ENCODE measurements at regions of chr2 and their contacts with region 1.

Region 1: DNA sequence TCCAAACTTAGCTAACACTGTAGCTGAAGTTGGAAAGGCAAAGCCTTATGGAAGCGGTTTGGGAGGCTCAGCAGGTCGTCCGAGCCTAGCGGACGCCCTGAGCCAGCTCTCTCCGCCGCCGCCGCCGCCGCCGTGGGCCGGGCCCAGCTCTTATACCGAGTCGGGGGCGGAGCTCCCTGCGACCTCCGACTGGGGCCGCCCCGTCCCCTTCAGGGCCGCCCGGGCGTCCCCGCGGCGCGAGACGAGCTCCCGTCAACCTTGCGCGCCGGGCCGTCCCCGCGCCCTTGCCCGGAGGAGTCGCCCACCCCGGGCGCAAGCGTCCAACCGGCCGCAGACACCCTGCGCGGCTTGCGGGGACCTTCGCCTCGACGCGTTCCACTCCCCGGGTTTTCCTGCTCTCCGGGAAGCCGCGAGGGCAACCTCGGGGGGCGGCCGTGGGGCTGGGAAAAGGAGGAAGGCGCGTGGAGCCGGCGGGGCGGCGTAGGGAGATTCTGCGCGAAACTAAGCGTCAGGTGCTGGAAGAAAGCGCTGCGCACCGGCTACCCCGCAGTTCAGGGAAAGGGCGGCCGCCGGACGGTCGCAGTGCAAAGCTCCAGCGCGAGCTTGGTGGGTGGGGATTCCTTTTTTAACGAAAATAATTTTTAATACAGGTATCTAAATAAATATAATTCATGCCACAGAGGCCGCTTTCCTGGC is at the start of gene SLC40A1:
- DNase-seq: peak; percentile 65 to 83
- ATAC-seq: peak; percentile 78 to 83
- H3K4me3 ChIP-seq: peak within 1 kb of the TSS; percentile 66 to 93 (median 79)
- H3K27ac ChIP-seq: peak within 1 kb of the TSS; percentile 87 to 93 (median 89)
- H3K4me1 ChIP-seq: peaks cover 41 to 44% of the 10 kb centered on the region in 2 donors
- H3K27me3 ChIP-seq: no peaks in the 10 kb centered on the region
- CTCF ChIP-seq: no peak
- POLR2A ChIP-seq: peak; percentile 84
- total RNA-seq, gene SLC40A1: 24.8 to 81.8 (median 37.4) TPM

Region 2: DNA sequence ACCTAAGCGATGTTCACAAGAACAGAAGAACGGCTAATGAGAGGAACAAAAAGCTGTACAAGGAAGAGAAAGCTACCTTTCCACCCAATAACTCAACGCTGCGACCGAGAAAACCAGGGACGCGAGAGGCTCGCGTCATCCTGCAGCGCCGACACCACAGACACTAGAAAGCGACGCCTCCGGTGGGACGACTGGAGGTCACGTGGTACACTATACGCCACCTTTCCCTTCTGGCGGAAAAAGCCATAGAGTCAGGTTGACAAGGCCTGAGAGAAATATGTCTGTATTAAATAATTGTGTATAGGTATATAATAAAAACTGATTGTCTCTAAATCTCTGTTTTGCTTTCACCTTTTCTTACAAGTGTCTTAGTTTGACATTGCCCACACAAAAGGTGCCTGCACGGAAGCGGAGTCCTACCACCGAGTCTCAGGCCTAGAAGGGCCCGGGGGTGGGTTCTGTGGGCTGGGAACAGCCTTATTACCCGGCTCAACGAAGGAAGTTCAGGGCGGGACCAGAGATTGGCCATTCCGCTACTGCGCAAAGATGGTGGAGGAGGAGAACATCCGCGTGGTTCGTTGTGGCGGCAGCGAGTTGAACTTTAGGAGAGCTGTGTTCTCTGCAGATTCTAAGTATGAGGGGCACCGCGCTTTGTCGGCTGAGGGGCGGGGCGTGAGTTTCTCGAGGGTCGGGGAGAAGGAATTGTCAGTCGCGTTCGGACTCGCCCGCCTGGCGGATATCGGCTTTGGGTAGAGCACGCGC is 139.7 kb before region 1 on chr2 and contains the start of gene WDR75:
- in situ Hi-C with region 1: no loop called
- intact Hi-C with region 1: loop called (anchors 5 kb)
- DNase-seq: peak; percentile 89 to 91
- ATAC-seq: peak; percentile 97 to 98
- H3K4me3 ChIP-seq: peak within 1 kb of the TSS; percentile 66 to 95 (median 75)
- H3K27ac ChIP-seq: peak within 1 kb of the TSS; percentile 89 to 92 (median 90)
- H3K4me1 ChIP-seq: peaks cover 23 to 25% of the 10 kb centered on the region in 2 donors
- H3K27me3 ChIP-seq: no peaks in the 10 kb centered on the region
- CTCF ChIP-seq: no peak
- POLR2A ChIP-seq: peak; percentile 63 to 72
- total RNA-seq, gene WDR75: 14.0 to 21.4 (median 16.7) TPM

Region 3: DNA sequence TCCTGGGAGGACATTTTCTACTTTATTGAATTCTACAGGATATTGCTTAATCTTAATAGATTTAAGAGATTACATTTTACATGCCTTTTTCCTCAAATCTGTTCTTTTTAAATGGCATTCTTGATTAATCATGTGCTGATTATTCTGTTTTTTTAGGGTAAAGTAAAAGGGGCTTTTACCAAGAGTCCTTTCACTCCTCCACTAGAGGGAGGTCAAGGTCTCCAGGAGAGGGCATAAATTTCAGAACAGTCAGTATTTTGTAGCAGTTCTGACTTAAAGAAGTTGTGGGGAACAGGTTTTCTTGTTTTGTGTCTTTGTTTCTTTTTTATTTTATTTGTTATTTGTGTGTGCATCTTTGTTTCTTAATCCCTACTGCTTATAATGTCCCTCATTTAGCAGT is 114.1 kb before region 1 on chr2:
- in situ Hi-C with region 1: no loop called
- intact Hi-C with region 1: loop called (anchors 5 kb)
- DNase-seq: no peak
- ATAC-seq: peak; percentile 69 to 77
- H3K4me3 ChIP-seq: no peak overlapping the region
- H3K27ac ChIP-seq: no peak overlapping the region
- H3K4me1 ChIP-seq: peaks cover 5 to 17% of the 10 kb centered on the region in 2 donors
- H3K27me3 ChIP-seq: no peaks in the 10 kb centered on the region
- CTCF ChIP-seq: peak in 4 of 5 experiments; percentile 50 to 70 (median 63)
- POLR2A ChIP-seq: no peak

Region 4: GRCh38 chr2:189613077-189613636 is 32.4 kb after region 1 on chr2:
- in situ Hi-C with region 1: no loop called
- intact Hi-C with region 1: loop called (anchors 2 kb)
- DNase-seq: peak; percentile 37 to 64
- ATAC-seq: peak; percentile 98 to 99
- H3K4me3 ChIP-seq: peak overlapping the region; percentile 34 to 65 (median 46)
- H3K27ac ChIP-seq: peak overlapping the region; percentile 81 to 90 (median 84)
- H3K4me1 ChIP-seq: peaks cover 7 to 13% of the 10 kb centered on the region in 2 donors
- H3K27me3 ChIP-seq: no peaks in the 10 kb centered on the region
- CTCF ChIP-seq: no peak
- POLR2A ChIP-seq: peak in 1 of 2 donors; percentile 38

Region 5: DNA sequence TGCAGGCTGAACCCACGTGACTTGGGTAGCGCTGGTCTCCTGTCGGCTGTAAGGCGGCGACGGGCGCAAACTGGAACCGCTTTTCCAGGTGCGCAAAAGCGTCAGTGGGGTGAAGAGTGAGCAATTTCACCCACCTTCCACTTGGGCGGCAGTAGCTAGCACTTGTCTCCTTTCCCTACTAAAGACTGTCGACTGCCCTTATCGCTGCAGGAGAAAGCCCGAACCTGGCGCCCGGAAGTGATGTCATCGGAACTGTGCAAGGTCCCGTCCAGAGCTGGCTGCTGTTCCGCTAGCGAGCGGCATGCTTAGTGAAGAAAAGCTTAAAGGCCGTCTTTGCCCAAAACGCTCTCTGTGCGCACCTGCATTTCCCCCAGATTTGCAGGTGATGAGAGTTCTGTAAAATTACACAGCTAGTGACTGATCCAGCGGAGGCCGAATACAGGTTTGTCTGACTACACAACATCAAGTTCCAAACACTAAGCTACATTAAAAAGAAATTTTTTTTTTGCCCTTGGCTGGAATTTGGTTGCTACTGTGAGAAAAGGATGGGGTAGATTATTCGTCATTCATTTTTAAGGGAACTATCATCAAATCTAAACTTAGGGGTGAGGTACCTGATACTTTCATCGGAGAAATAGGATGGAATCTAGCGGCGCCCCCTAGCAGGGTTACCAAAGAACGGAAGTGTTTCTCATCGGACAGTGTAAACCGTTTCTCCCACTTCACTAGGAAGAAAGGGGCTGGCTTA is 181.9 kb after region 1 on chr2 and contains the start of gene OSGEPL1:
- in situ Hi-C with region 1: no loop called
- intact Hi-C with region 1: no loop called
- DNase-seq: peak; percentile 87 to 89
- ATAC-seq: peak; percentile 98
- H3K4me3 ChIP-seq: peak within 1 kb of the TSS; percentile 59 to 89 (median 66)
- H3K27ac ChIP-seq: peak within 1 kb of the TSS; percentile 81 to 89 (median 86)
- H3K4me1 ChIP-seq: peaks cover 16 to 23% of the 10 kb centered on the region in 2 donors
- H3K27me3 ChIP-seq: no peaks in the 10 kb centered on the region
- CTCF ChIP-seq: peak in 4 of 5 experiments; percentile 13 to 52 (median 32)
- POLR2A ChIP-seq: peak in 1 of 2 donors; percentile 8
- total RNA-seq, gene OSGEPL1: 2.1 to 15.6 (median 6.5) TPM

Region 6: GRCh38 chr2:189959450-189959849 is 378.6 kb after region 1 on chr2:
- in situ Hi-C with region 1: no loop called
- intact Hi-C with region 1: no loop called
- DNase-seq: no peak
- ATAC-seq: no peak
- H3K4me3 ChIP-seq: no peak overlapping the region
- H3K27ac ChIP-seq: no peak overlapping the region
- H3K4me1 ChIP-seq: no peaks in the 10 kb centered on the region
- H3K27me3 ChIP-seq: no peaks in the 10 kb centered on the region
- CTCF ChIP-seq: no peak
- POLR2A ChIP-seq: no peak